Dorsolateral prefrontal cortex (tissue), 120 donors: ENCODE measurements at regions of chr5 and their contacts with region 1.

Region 1: GRCh38 chr5:10283927-10284635 is 23.6 kb downstream of the CMBL start:
- DNase-seq: peak; percentile 83 to 92 (median 88)
- H3K4me3 ChIP-seq: peak overlapping the region in 11 of 59 donors; percentile 0 to 48 (median 14)
- H3K27ac ChIP-seq: peak overlapping the region in 32 of 59 donors; percentile 2 to 75 (median 51)
- H3K27me3 ChIP-seq: no peaks in the 10 kb centered on the region
- CTCF ChIP-seq: peak; percentile 84 to 100 (median 97)

Region 2: DNA sequence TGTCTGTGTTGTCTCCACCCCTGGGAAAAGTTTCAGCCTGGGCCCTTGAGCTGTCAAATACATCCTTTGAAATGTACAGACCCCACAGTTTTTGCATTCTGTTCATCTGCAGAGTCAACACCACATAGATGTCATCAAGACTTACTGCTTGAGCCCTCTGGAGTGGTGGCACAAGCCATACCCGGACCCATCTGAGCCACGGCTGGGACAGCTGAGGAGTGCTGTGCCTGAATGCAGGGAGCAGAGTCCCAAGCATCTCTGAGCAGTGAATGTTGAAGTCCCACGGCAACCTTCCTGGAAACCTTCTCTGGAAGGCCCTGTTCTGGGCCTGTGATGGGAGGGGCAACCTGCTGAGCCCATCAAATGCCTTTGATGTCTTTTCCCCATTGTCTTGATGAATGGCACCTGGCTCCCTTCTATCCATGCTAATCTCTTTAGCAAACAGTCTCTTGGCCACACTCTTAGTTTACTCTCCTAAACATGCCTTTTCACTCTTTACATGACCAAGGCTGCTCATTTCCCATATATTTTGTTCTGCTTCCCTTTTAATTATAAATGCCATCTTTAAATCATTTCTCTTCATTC is 126.9 kb before region 1 on chr5:
- intact Hi-C with region 1: no loop called
- DNase-seq: no peak
- H3K4me3 ChIP-seq: no peak overlapping the region
- H3K27ac ChIP-seq: no peak overlapping the region
- H3K27me3 ChIP-seq: no peaks in the 10 kb centered on the region
- CTCF ChIP-seq: no peak

Region 3: DNA sequence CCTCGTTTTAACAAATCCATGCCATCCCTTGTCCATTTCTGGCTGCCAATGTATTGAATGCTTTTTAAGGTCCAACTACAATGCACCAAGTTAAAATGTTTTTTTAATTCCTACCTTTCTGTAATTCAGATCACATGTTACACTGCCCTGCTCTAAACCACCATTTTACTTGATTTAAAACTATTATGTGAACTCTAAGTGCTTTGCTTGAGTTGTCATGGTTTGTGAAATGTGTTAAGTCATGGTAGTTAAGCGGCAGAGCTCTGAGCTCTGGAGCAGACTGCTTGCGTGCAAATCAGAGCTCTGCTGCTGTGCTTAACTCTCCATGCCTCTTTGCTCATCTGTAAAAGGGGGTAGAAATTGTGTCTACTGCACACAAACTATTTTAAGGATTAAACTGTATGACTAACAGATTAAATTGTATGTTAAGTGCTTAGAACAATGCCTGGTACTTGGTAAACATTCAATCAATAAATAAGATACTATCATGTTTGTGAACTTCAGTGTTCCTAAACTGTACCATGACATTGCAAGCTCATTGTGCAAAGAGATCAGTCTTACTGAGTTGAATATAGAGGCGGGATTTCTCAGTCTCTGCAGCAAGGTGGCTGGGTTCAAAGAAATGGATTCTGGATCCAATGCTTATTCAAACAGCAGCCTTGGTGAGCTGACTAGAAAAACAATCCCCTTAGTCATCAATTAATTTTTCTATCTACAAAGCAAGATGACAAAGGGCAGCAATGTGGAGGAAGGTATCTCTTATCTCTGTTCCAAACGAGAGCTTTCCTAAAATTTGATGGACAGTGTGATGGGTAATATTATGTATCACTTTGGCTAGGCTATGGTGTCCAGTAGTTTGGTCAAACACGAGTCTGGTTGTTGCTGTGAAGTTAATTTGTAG is 39.8 kb after region 1 on chr5:
- intact Hi-C with region 1: no loop called
- DNase-seq: no peak
- H3K4me3 ChIP-seq: no peak overlapping the region
- H3K27ac ChIP-seq: peak overlapping the region in 38 of 59 donors; percentile 3 to 66 (median 40)
- H3K27me3 ChIP-seq: no peaks in the 10 kb centered on the region
- CTCF ChIP-seq: no peak

Region 4: DNA sequence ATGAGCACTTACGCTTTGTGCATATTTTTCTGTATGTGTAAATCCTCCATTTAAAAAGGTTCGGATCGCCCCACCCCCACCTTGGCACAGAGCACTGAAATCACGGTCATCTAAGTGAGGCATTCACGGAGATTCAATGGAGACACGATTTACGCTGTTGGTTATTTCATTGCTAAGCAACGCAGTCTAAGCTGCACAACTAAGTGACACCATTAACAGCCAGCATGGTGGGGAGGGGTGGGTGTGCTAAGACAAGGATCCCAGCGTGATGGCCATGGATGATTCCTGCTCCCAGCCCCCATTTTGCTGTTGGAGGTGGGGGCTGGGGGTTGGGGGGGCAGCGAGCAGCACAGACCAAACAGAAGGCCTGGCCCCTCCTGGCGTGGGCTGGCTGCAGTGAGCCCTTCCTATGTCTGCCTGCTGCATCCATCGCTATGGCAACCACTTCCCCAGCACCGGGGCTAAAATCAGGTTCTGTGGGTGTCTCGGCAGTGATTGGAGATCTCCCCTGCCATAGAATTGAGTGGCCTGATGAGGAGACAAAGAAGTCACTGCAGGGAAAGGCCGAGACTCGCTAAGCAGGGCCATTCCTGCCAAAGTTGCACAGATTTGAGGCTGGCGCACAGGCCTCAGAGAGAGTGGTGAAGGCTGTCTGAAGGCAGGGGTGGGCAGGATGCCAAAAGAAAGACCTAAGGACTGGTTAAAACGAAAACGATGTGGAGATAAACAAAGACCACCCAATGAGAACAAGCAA is 55.2 kb after region 1 on chr5:
- intact Hi-C with region 1: loop called in 1 of 2 experiments (anchors 5 kb)
- DNase-seq: peak in 9 of 10 donors; percentile 30 to 92 (median 79)
- H3K4me3 ChIP-seq: peak overlapping the region in 50 of 59 donors; percentile 4 to 52 (median 30)
- H3K27ac ChIP-seq: peak overlapping the region in 57 of 59 donors; percentile 19 to 93 (median 80)
- H3K27me3 ChIP-seq: no peaks in the 10 kb centered on the region
- CTCF ChIP-seq: no peak

Region 5: DNA sequence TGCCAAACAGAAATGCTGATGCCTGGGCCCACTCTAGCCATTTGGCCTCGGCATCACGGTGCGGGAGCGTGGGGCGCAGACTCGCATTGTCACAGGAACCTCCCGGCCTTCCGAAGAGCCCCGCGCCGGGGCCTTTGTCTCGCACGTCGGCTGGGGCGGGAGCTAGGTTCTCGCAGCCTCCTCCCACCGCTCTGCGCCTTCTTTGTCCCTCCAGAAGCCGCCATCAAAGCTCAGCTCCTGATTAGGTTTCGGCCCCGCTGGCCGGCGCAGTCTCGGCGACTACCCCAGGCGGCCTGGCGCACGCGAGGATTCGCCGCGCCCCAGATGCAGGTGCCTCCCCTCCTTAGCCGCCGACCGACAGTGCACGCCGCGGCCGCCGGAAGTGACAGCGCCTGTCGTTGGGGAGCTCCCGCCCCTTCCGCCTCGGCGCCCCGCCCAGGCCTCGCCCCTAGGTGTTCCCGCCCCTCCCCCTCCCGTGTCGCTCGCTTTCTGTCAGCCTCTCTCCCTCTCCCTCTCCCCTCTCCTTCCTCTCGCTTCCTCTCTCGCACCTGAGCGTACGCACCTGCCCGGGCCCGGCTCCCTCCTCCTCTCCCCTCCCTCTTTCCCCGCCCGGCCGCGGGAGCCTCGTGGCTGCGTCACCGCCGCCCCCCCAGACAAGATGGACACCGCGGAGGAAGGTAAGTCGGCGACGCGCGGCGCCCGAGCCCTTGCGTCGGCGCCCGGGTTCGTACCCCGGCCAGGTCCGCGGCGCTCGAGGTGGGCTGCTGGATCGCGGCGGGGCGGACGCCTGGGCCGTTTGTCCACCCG is 69.4 kb after region 1 on chr5 and contains the start of gene MARCHF6:
- intact Hi-C with region 1: loop called (anchors 1 to 2 kb)
- DNase-seq: peak; percentile 86 to 96 (median 94)
- H3K4me3 ChIP-seq: peak within 1 kb of the TSS; percentile 63 to 99 (median 91)
- H3K27ac ChIP-seq: peak within 1 kb of the TSS; percentile 54 to 99 (median 95)
- H3K27me3 ChIP-seq: no peaks in the 10 kb centered on the region
- CTCF ChIP-seq: peak in 27 of 56 donors; percentile 5 to 50 (median 23)
- total RNA-seq, gene MARCHF6: 195 to 408 (median 303) TPM

Region 6: GRCh38 chr5:10424124-10424731 is 140.1 kb after region 1 on chr5:
- intact Hi-C with region 1: loop called (anchors 1 to 5 kb)
- DNase-seq: peak in 4 of 10 donors; percentile 44 to 76 (median 53)
- H3K4me3 ChIP-seq: no peak overlapping the region
- H3K27ac ChIP-seq: peak overlapping the region in 5 of 59 donors; percentile 1 to 23 (median 13)
- H3K27me3 ChIP-seq: no peaks in the 10 kb centered on the region
- CTCF ChIP-seq: peak; percentile 6 to 83 (median 70)

Region 7: GRCh38 chr5:10627160-10627701 is 343.1 kb after region 1 on chr5:
- intact Hi-C with region 1: loop called in 1 of 2 experiments (anchors 5 kb)
- DNase-seq: no peak
- H3K4me3 ChIP-seq: peak overlapping the region; percentile 2 to 70 (median 47)
- H3K27ac ChIP-seq: peak overlapping the region in 56 of 59 donors; percentile 17 to 88 (median 74)
- H3K27me3 ChIP-seq: no peaks in the 10 kb centered on the region
- CTCF ChIP-seq: no peak